ENCODE measurements at regions of chr13 and their contacts with region 1.

Region 1: GRCh38 chr13:48769107-48769704 is 115.5 kb downstream of the CYSLTR2 start:
- DNase-seq: peak; percentile 62
- CTCF ChIP-seq: peak; percentile 96

Region 2: DNA sequence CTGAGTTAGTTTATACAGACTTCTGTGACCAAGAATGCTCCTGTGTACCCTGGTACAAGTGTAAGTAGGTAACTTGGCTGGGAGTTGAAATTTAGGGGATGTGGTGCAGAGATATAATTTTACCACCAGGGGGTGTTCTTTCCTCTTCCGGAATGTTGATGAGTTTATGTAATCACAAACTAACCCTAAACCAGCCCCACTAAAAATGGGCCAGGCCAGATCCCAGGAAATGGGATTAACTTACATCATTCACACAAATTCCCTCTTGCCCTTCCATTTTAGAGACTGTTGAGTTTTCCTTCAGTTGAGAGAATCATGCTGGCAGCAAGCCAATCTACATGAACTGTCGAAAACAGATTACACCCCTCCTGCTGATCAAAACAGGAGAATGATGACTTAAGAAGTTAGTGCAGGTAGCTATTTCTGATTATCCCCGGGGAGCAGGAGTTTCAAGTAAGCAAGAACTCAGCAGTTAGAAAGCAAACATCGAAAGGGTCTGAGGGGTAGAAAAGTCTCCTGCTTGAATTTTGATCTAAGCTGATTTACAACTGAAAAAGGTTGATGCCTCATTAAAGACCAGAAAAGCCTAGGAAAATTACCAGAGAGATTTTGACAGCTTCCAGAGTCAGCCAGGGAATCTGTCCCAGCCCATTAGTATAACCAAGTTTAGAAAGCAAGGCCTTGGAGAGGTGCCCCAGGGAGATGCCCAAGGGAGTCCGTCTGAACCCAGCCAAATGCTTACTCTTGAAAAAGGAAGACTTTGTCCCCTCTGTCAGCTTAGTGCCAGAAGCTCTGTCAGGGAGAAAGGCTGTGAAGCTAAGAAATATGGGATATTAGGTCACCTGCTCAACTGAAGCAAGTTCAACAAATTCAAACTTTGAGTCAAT is 642.0 kb before region 1 on chr13:
- CTCF ChIA-PET with region 1: interaction called, 25 read pairs
- POLR2A ChIA-PET with region 1: no interaction called
- DNase-seq: peak; percentile 60
- CTCF ChIP-seq: peak; percentile 52

Region 3: DNA sequence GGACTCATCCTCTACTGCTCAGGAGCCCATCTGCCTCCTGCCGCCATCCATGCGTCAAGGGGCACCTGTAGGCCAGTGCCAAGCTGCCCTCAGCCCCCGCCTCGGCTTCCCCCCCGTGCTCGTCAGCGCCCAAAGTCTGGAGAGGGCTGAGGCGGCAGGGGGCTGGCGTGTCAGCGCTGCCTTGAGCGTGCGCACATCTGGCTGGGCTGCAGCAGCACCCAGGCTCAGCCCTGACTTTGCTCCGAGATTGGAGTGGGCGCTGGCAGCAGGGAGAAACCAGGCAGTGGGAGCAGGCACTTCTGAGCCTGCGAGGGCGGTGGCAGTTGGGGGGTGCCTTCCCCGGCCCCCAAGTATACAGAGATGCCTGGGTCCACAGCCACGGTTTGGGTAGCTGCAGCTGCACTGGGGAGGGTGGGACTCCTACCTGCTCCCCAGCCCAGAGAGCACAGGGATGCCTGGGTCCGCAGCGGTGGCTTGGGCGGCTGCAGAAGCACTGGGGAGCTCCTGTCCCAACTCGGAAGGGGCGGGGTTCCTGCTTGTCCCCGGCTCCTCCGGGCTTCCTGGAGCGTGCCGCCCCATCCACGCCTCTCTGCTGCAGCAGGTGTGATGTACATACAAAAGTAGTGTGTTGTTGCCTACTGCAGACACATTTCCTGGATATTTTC is 311.5 kb before region 1 on chr13:
- CTCF ChIA-PET with region 1: no interaction called
- POLR2A ChIA-PET with region 1: no interaction called
- DNase-seq: no peak
- CTCF ChIP-seq: no peak

Region 4: GRCh38 chr13:48580185-48580803 is 188.9 kb before region 1 on chr13:
- CTCF ChIA-PET with region 1: interaction called, 15 read pairs
- POLR2A ChIA-PET with region 1: no interaction called
- DNase-seq: peak; percentile 20
- CTCF ChIP-seq: peak; percentile 62

Region 5: DNA sequence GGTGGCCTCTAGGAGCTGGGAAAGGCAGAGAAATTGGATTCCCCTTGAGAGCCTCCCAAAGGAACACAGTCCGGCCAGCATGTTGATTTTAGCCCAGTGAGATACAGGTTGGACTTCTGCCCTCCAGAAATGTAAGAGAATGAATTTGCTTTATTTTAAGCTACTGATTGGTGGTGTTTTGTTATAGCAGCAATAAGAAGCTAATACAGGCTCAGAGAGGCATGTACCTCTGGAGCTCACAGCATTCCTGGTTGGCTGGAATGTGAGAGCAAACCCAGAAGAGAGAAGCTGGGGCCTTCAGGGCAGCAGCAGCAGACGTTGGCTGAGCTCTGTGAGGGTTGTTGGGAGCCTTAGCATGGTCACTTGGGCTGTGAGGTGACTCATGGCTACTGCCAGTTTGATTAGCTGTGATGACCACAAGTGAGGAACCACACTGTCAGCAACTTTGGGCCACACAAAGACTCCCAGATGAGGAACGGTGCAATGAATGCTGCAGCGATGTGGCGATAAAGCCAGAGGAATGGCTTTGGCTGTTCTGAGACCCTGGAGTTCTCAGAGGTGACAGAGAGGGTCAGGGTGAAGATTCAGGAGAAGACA is 35.4 kb before region 1 on chr13:
- CTCF ChIA-PET with region 1: interaction called, 10 read pairs
- POLR2A ChIA-PET with region 1: no interaction called
- DNase-seq: no peak
- CTCF ChIP-seq: no peak

Region 6: GRCh38 chr13:48783181-48783630 is 14.0 kb after region 1 on chr13:
- CTCF ChIA-PET with region 1: interaction called, 27 read pairs
- POLR2A ChIA-PET with region 1: no interaction called
- DNase-seq: no peak
- CTCF ChIP-seq: no peak

Region 7: GRCh38 chr13:48998641-48999292 is 229.6 kb after region 1 on chr13:
- CTCF ChIA-PET with region 1: no interaction called
- POLR2A ChIA-PET with region 1: no interaction called
- DNase-seq: no peak
- CTCF ChIP-seq: no peak